BJ (cell line): ENCODE measurements at regions of chr2 and their contacts with region 1.

Region 1: DNA sequence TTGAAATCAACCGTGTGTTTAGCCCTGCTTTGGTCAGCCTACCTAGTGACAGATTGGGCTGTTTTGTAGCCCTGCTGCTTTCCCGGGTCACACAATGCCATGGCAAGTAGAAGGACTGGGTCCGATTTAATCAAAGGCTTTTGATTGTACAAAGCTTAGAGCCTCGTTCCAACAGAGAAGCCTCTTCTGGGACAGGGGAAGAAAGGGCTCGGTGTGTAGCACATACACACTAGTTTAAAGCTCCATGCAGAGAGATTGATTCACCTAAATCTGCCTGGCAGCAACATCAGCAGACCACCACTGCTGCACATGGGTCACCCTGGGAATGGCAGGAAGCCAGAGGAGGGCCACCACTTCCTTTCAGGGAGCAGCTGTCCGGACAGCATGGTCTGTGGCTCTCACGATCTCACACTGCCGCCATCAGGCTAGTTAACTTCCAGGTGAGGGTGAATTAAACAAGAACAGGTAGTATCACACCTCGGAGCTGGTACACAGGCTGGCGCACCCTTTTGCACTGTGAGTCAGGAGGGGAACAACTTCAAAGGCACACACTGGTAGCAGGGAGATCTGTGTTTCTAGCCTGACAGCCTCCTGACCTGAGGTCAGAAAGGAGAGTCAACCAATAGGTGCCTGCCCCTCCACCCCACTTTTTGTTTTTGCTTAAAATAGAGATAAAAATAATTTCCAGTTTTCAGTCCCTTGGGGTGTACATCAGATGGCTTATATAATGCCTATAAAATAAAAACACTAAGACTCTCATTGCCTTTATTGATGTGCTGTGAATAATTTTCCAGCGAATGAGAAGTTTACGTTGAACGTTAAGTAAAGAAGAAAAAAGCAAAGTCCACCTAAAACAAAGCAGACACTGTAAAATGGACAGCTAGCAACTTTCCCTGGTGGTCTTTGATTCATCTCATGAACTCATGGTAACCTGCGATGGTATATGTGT is 108.5 kb downstream of the CDCA7 start:
- DNase-seq: no peak
- H3K4me3 ChIP-seq: no peak overlapping the region
- H3K27me3 ChIP-seq: peaks cover 9% of the 10 kb centered on the region
- CTCF ChIP-seq: no peak

Region 2: GRCh38 chr2:172358691-172359556 is 1104.2 kb before region 1 on chr2:
- CTCF ChIA-PET with region 1: no interaction called
- POLR2A ChIA-PET with region 1: no interaction called
- DNase-seq: no peak
- H3K4me3 ChIP-seq: no peak overlapping the region
- H3K27me3 ChIP-seq: no peaks in the 10 kb centered on the region
- CTCF ChIP-seq: no peak

Region 3: DNA sequence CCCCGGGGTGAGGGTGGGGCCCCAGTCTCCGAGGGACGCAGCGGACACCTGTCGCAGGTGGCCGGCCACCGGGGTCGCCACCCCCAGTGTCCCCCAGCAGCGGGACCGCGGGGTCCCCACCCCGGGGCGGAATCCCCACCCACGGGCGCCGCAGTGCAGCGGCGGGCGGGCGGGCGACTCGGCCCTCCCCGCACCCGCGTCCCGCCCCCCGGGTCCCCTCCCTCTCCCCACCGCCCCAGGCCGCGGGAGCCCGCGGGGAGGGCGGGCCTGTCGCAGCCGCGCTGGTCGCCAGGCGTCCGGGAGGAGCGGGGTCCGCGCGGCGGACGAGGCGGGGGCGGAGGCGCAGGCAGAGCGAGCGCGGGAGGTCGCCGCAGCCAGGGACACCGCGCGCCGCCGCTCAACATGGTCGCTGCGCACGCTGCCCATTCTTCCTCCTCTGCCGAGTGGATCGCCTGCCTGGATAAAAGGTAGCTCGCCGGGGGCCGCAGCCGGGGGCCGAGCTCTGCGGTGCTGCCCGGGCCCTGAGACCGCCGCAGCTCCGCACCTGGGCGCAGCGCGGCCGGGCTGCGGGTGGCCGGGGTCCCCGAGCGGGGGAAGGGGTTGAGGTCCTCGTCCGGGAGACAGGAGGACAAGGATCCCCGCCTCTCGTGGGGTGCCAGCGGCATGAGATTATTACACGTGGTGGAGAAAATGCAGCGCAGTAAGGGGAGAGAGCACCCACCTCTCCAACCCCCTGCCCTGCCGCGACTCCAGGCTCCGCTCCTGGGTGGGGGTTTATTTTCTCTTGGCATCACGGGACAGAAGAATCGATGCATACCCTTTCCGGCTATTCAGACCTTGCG is 727.4 kb before region 1 on chr2 and contains the start of gene RAPGEF4:
- CTCF ChIA-PET with region 1: no interaction called
- POLR2A ChIA-PET with region 1: no interaction called
- DNase-seq: no peak
- H3K4me3 ChIP-seq: peak within 1 kb of the TSS; percentile 38
- H3K27me3 ChIP-seq: peaks cover 18% of the 10 kb centered on the region
- CTCF ChIP-seq: no peak
- polyA plus RNA-seq, gene RAPGEF4: 0.42 and 0.60 TPM in 2 replicates

Region 4: DNA sequence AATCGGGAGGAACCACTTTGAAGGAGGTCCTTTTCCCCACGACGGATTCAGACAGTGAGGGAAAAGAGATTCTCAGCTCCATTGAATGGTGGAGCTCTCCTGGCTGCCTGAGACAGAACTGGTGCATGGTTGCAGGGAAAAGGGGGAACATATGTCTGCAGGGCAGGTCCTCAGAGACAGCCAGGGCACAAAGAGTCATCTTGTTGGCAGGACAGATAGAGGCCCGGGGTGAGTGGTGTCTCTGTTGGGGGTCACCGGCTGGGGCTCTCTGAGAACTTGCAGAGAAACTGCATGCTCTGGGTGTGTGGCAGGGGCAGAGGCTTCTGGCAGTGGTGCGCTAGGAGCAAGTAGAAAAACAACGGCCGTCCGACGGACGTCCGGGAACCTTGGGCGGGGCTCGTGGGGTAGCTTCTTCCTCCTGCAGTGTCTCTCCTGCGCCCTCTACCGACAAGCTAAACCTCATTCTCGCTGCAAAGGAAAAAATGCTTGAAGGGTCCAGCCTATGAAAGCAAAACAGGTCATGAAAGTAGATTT is 14.2 kb before region 1 on chr2:
- CTCF ChIA-PET with region 1: interaction called, 10 read pairs
- POLR2A ChIA-PET with region 1: no interaction called
- DNase-seq: peak; percentile 17
- H3K4me3 ChIP-seq: peak overlapping the region; percentile 18; the same call in 1 of the 2 replicates
- H3K27me3 ChIP-seq: no peaks in the 10 kb centered on the region
- CTCF ChIP-seq: peak; percentile 77